Activated CD4-positive, alpha-beta memory T cell treated with anti-CD3 and anti-CD28 coated beads, Interleukin-2, amount 10 ng/mL, durations not matched to agents 7 days and 5 days (primary cell): ENCODE measurements at regions of chr1 and their contacts with region 1.

Region 1: GRCh38 chr1:91885716-91886506 is at the start of gene TGFBR3:
- DNase-seq: peak; percentile 73
- H3K4me3 Mint-ChIP-seq: peak within 1 kb of the TSS; percentile 90
- H3K27ac Mint-ChIP-seq: peak within 1 kb of the TSS; percentile 70
- H3K4me1 Mint-ChIP-seq: peaks cover 39% of the 10 kb centered on the region
- H3K27me3 Mint-ChIP-seq: peaks cover 11% of the 10 kb centered on the region
- total RNA-seq, gene TGFBR3: 35.9 to 41.6 TPM

Region 2: GRCh38 chr1:91500756-91501522 is 385.0 kb before region 1 on chr1 and contains the start of gene CDC7:
- CTCF ChIA-PET with region 1: interaction called, 15 read pairs
- POLR2A ChIA-PET with region 1: interaction called, 26 read pairs
- DNase-seq: peak; percentile 85
- H3K4me3 Mint-ChIP-seq: no peak within 1 kb of the TSS
- H3K27ac Mint-ChIP-seq: no peak within 1 kb of the TSS
- H3K4me1 Mint-ChIP-seq: peaks cover 37% of the 10 kb centered on the region
- H3K27me3 Mint-ChIP-seq: no peaks in the 10 kb centered on the region
- total RNA-seq, gene CDC7: 26.7 to 28.1 TPM

Region 3: DNA sequence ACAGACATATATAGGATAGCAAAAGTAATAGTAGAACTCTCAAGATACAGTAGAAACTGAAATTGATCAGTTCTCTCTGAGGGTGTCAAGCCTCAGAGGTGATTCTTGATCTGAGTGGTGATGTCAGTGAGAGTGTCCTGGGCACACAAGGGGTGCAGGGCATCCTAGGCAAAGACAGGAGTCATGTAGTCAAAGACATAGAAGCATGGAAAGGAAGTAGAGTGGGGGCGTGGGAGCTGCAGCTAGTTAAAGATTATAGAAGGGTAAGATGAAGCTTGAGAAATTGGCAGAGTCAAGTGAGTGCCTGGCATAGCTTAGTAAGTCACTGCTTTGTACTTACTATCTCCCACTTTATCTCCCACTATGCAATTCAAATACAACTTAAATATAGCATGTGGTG is 362.4 kb before region 1 on chr1:
- CTCF ChIA-PET with region 1: interaction called, 14 read pairs
- POLR2A ChIA-PET with region 1: interaction called, 3 read pairs
- DNase-seq: peak; percentile 38
- H3K4me3 Mint-ChIP-seq: no peak overlapping the region
- H3K27ac Mint-ChIP-seq: no peak overlapping the region
- H3K4me1 Mint-ChIP-seq: peaks cover 35% of the 10 kb centered on the region
- H3K27me3 Mint-ChIP-seq: no peaks in the 10 kb centered on the region

Region 4: GRCh38 chr1:91548376-91549040 is 337.4 kb before region 1 on chr1:
- CTCF ChIA-PET with region 1: interaction called, 3 read pairs
- POLR2A ChIA-PET with region 1: interaction called, 12 read pairs
- DNase-seq: peak; percentile 54
- H3K4me3 Mint-ChIP-seq: peak overlapping the region; percentile 67
- H3K27ac Mint-ChIP-seq: peak overlapping the region; percentile 100
- H3K4me1 Mint-ChIP-seq: peaks cover 80% of the 10 kb centered on the region
- H3K27me3 Mint-ChIP-seq: peaks cover 3% of the 10 kb centered on the region

Region 5: GRCh38 chr1:91751275-91751674 is 134.6 kb before region 1 on chr1:
- CTCF ChIA-PET with region 1: interaction called, 7 read pairs
- POLR2A ChIA-PET with region 1: interaction called, 10 read pairs
- DNase-seq: no peak
- H3K4me3 Mint-ChIP-seq: no peak overlapping the region
- H3K27ac Mint-ChIP-seq: no peak overlapping the region
- H3K4me1 Mint-ChIP-seq: peaks cover 59% of the 10 kb centered on the region
- H3K27me3 Mint-ChIP-seq: no peaks in the 10 kb centered on the region

Region 6: DNA sequence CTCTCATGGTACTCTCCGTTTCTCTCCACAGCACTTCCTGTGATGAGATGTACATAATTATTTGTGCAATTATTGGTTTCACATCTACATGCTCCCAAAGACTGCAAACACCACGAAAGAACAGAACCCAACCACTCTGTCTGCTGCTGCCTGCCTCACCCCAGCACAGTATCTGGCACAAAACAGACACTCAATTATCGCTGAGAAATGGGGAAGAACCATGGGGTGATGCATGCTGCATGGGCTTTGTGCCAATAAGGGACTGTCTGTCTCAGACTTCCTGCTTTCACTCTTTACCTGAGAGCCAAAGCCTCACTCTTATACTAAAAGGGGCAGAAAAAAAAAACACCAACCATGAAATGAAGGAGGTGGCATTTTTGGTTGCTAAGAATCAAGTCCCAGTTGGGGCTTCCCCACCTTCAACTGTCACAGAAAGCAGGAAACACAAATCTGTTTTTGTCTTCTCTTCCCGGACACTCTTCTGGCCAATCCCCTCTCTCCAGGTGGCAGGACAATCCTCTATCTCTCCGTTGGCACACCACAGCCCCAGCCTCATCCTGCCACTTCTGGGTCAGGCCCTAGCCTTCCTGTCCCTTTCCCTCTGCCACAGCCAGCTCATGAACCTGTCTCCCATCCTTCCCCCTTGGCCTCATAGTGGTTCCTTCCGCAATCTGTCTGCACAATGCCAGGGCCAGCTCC is 81.9 kb before region 1 on chr1:
- CTCF ChIA-PET with region 1: interaction called, 4 read pairs
- POLR2A ChIA-PET with region 1: interaction called, 30 read pairs
- DNase-seq: peak; percentile 76
- H3K4me3 Mint-ChIP-seq: peak overlapping the region; percentile 69
- H3K27ac Mint-ChIP-seq: peak overlapping the region; percentile 95
- H3K4me1 Mint-ChIP-seq: peaks cover 74% of the 10 kb centered on the region
- H3K27me3 Mint-ChIP-seq: peaks cover 2% of the 10 kb centered on the region

Region 7: DNA sequence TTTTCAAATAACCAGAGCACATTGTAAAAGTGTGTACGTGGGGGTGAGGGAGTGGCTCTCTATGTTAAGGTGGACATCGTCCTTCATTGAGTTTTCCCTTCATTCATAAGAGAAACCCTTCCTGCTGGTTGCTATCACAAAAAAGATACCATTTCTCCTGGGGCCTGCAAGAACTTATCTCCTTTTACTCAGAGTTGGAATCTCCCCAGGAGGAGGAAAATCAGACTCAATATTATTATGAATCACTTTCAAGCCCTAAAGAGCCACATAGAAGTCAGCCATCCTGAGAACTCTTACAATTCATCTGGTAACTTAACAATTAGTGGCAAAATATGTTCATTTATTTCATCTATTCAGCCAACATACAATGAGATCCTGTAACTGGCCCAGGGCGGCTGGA is 27.1 kb after region 1 on chr1:
- CTCF ChIA-PET with region 1: no interaction called
- POLR2A ChIA-PET with region 1: no interaction called
- DNase-seq: no peak
- H3K4me3 Mint-ChIP-seq: no peak overlapping the region
- H3K27ac Mint-ChIP-seq: no peak overlapping the region
- H3K4me1 Mint-ChIP-seq: no peaks in the 10 kb centered on the region
- H3K27me3 Mint-ChIP-seq: peaks cover 6% of the 10 kb centered on the region